Activated CD4-positive, alpha-beta memory T cell treated with anti-CD3 and anti-CD28 coated beads for 36 hours (primary cell): ENCODE measurements at regions of chr22 and their contacts with region 1.

Region 1: GRCh38 chr22:35330258-35330861 is 30.7 kb downstream of the TOM1 start:
- DNase-seq: peak; percentile 87
- H3K4me3 Mint-ChIP-seq: peak overlapping the region; percentile 83
- H3K27ac Mint-ChIP-seq: peak overlapping the region; percentile 93
- H3K4me1 Mint-ChIP-seq: peaks cover 46% of the 10 kb centered on the region
- H3K27me3 Mint-ChIP-seq: no peaks in the 10 kb centered on the region

Region 2: GRCh38 chr22:35313311-35314121 is 16.8 kb before region 1 on chr22:
- CTCF ChIA-PET with region 1: interaction called, 5 read pairs
- POLR2A ChIA-PET with region 1: interaction called, 10 read pairs
- intact Hi-C with region 1: loop called (anchors 1 kb)
- DNase-seq: peak; percentile 70
- H3K4me3 Mint-ChIP-seq: no peak overlapping the region
- H3K27ac Mint-ChIP-seq: peak overlapping the region; percentile 56
- H3K4me1 Mint-ChIP-seq: peaks cover 73% of the 10 kb centered on the region
- H3K27me3 Mint-ChIP-seq: no peaks in the 10 kb centered on the region